ENCODE measurements at regions of chr17 and their contacts with region 1.

Region 1: DNA sequence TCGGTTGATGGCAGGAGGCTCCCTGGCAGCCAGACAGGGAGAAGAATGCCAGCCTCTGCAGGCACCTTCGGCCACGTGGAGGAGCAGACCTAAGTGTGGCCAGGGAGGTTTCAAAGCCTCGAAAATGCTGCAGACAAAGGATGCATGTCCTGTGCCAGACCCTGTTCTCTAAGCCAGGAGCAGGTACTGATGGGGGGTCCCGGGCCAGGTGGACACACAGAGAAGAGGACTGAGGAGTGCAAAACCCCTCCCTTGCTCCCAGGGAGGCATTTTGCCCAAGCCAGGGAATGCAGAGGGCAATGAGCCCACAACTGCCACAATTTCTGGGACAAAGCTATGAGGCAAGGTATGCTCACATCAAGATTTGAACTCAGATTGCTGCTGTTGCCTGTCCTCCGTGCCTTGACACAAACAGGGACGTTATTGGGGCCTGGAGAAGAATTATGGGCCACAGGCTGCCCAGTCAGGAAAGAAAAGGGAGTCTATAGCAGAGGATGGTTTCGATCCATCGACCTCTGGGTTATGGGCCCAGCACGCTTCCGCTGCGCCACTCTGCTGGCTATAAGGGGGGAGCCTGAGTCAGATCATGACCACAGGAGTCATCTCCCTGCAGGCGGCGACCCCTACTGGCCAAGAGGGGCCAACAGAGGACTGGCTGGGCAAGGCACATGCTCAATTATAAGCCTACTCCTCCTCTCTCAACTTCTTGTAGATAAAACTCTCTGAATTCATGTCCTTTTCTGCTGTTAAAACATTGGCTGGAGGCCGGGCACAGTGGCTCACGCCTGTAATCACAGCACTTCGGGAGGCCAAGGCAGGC is 25.1 kb upstream of the FOXK2 start:
- DNase-seq: peak in 1 of 2 donors; percentile 93
- H3K4me3 ChIP-seq: no peak overlapping the region
- H3K27ac ChIP-seq: peak overlapping the region; percentile 54
- H3K4me1 ChIP-seq: peaks cover 50% of the 10 kb centered on the region
- H3K27me3 ChIP-seq: no peaks in the 10 kb centered on the region
- CTCF ChIP-seq: peak; percentile 48 to 81 (median 80)
- POLR2A ChIP-seq: no peak

Region 2: DNA sequence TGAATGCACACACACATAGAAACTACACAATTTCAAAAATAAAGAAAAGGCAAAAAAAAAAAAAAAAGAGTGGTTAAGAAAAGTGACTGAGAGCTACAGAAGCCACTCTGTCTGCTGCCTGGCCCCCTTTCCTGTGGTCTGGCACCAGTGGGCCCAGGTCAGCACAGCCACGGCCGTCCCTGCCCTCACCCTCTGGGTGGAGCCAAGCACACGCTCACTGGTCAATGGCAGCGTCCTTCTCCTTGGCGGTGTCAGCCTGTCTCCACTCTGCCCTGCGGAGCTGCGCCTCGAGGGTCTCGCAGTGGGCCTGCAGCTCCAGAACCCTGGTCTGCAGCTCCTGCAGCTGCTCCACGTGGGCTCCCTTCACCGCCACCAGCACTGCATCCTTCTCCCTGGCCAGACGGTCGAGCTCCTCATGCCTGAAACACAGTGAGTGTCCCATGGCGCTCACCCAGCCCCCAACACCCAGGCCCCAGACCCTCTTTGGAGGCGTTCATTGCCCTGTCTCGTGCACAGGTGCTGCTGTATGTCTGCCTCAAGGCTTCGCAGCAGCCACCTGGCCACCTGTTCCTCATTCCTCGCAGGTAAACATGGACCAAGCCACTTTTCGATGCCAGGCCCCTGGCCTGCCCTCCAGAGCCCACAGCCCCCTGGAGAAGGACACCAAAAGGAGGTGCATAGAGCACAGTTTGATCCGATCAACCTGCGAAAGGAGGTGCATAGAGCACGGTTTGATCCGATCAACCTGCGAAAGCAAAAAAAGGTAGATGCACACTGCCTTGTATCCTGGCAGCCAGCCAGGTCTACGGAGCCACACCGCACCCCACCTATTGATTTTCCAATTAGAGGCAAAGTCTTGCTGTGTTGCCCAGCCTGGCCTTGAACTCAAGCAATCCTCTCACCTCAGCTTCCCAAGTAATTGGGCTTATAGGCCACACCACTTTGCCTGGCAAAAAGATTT is 306.2 kb before region 1 on chr17:
- intact Hi-C with region 1: no loop called
- DNase-seq: no peak
- H3K4me3 ChIP-seq: no peak overlapping the region
- H3K27ac ChIP-seq: no peak overlapping the region
- H3K4me1 ChIP-seq: no peaks in the 10 kb centered on the region
- H3K27me3 ChIP-seq: no peaks in the 10 kb centered on the region
- CTCF ChIP-seq: no peak
- POLR2A ChIP-seq: no peak

Region 3: GRCh38 chr17:82384730-82385481 is 109.5 kb before region 1 on chr17:
- intact Hi-C with region 1: no loop called
- DNase-seq: no peak
- H3K4me3 ChIP-seq: no peak overlapping the region
- H3K27ac ChIP-seq: peak overlapping the region; percentile 72
- H3K4me1 ChIP-seq: peaks cover 28% of the 10 kb centered on the region
- H3K27me3 ChIP-seq: no peaks in the 10 kb centered on the region
- CTCF ChIP-seq: no peak
- POLR2A ChIP-seq: no peak

Region 4: DNA sequence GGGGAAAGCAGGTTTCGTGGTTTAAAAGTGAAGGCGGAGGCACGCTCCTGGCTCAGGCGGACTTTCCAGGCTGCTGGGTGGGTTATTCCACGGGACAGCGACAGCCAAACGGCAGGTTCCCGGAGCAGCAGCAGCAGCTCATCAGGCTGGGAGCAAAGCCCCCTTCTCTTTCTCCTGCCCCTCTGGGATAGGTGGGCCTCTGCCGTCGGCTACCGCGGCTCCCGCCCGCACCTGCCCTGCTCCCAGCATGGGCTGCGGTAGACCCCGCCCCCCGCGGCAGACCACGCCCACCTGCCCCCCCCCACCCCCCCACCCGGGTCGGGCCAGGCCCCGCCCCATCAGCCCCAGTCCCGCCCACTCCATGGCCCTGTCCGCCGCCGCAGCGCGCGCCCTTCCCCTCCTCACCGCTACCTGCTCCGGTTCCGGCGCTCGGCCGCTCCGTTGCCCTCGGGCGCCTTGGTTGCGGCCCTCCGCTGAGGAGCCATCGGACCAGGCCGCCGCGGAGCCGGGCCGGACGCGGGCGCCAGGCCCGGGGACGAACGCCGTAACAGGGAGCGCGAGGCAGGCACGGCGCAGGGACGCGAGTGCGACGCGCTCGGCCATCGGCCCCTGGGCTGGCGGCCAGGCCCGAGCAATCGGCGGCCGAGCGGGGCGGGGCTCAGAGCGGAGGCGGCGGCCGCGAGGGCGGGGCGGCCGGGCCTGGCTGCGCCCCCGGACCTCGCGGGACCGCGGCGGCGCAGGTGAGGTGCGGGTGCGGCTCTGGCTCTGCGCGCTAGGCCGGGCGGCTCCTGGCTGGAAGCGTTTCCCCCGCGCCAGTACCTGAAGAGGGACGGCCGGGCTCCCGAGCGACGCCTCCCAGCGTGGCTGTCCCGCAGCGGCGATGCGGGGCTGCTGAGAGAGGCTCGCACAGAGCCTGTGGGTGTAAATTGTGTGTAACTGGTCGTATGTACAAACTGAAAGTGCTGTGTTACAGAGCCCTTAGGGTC is 76.2 kb before region 1 on chr17 and contains the starts of genes HEXD and OGFOD3:
- intact Hi-C with region 1: loop called (anchors 2 kb)
- DNase-seq: no peak
- H3K4me3 ChIP-seq: peak within 1 kb of the TSS; percentile 79 to 83
- H3K27ac ChIP-seq: peak within 1 kb of the TSS; percentile 84
- H3K4me1 ChIP-seq: peaks cover 25% of the 10 kb centered on the region
- H3K27me3 ChIP-seq: no peaks in the 10 kb centered on the region
- CTCF ChIP-seq: no peak
- POLR2A ChIP-seq: peak in 1 of 2 donors; percentile 38
- total RNA-seq, gene HEXD: 90.4 TPM
- total RNA-seq, gene OGFOD3: 25.5 TPM

Region 5: DNA sequence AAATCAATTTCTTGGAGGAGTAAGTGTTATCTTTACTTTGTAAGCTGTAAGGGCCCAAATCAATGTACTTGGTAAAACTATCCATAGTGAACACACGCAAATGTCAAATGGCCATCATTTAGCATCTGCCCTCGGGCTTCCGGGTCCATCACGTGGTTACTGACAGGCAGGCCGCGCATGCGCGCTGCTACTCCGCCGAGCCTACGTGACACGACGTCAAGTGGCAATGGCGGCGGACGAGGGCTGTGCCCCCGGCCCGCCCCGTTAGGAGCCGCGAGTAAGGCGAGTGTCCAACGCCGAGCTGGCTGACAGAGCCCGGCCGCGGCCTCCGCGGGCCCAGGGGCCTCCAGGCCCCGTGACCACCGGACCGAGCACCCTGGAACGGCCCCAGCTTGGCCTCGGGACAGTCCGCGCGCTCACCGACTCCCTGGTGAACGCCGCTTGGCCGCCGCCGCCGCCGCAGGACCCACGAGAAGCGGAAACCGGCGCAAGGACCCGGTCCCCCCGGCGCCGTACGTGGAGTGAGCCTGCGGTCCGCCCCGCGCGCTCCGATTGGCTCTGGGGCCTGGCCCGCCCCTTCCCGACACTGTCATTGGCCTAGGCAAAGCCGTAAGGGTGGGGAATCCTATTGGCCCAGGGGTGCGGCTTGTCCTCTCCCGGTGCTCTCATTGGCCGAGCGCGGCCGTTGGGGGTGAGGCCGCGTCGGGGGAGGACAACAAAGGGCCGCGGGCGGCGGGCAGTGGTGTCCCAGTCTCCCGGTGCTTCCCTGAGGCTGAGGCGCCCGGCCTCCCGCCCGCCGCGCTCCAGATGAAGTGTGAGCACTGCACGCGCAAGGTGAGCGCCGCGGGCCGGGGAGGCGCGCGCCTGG is 36.2 kb before region 1 on chr17 and contains the start of gene NARF:
- intact Hi-C with region 1: loop called (anchors 5 kb)
- DNase-seq: peak in 1 of 2 donors; percentile 99
- H3K4me3 ChIP-seq: peak within 1 kb of the TSS; percentile 56 to 94
- H3K27ac ChIP-seq: peak within 1 kb of the TSS; percentile 100
- H3K4me1 ChIP-seq: peaks cover 19% of the 10 kb centered on the region
- H3K27me3 ChIP-seq: no peaks in the 10 kb centered on the region
- CTCF ChIP-seq: no peak
- POLR2A ChIP-seq: peak; percentile 86 to 94
- total RNA-seq, gene NARF: 62.6 TPM

Region 6: GRCh38 chr17:82551779-82552457 is 57.5 kb after region 1 on chr17:
- intact Hi-C with region 1: loop called (anchors 10 kb)
- DNase-seq: no peak
- H3K4me3 ChIP-seq: no peak overlapping the region
- H3K27ac ChIP-seq: peak overlapping the region; percentile 34
- H3K4me1 ChIP-seq: peaks cover 66% of the 10 kb centered on the region
- H3K27me3 ChIP-seq: no peaks in the 10 kb centered on the region
- CTCF ChIP-seq: peak; percentile 15 to 66 (median 61)
- POLR2A ChIP-seq: no peak